SK-N-SH (cell line): ENCODE measurements at regions of chr17 and their contacts with region 1.

Region 1: GRCh38 chr17:29111816-29112499 is 68.2 kb downstream of the MYO18A start:
- DNase-seq: peak; percentile 82
- H3K4me3 ChIP-seq: no peak overlapping the region
- H3K27ac ChIP-seq: no peak overlapping the region
- H3K4me1 ChIP-seq: peaks cover 5 to 39% of the 10 kb centered on the region in 2 experiments; a peak in 2 of 4 replicates
- H3K27me3 ChIP-seq: no peaks in the 10 kb centered on the region
- CTCF ChIP-seq: peak; percentile 91
- EP300 ChIP-seq: no peak
- RAD21 ChIP-seq: peak; percentile 94

Region 2: DNA sequence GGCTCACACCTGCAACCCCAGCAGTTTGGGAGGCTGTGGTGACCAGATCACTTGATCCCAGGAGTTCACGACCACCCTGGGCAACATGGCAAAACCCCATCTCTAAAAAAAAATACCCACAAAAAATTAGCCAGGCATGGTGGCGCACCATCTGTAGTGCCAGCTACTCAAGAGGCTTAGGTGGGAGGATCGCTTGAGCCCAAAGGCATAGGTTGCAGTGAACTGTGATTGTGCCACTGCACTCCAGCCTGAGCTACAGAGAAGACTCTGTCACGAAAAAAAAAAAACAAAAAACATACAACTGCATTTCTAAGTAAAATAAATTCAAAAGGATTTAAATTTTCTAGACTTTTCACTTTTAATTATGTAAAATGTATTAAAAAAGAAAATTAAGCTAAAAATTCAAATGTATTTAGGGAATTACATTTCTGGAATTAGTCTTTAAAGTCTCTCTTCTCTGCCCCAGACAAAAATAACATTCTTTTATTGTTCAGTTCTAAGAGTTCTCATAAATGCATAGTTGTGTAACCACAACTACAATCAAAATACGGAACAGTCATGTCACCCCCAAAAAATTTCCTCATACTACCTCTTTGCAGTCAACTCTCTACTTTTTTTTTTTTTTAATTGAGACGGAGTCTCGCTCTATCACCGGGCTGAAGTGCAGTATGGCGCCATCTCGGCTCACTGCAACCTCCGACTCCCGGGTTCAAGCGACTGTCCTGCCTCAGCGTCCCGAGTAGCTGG is 283.5 kb before region 1 on chr17:
- CTCF ChIA-PET with region 1: no interaction called
- POLR2A ChIA-PET with region 1: no interaction called
- DNase-seq: no peak
- H3K4me3 ChIP-seq: no peak overlapping the region
- H3K27ac ChIP-seq: no peak overlapping the region; a peak in 1 of 4 replicates
- H3K4me1 ChIP-seq: no peaks in the 10 kb centered on the region
- H3K27me3 ChIP-seq: no peaks in the 10 kb centered on the region
- CTCF ChIP-seq: no peak
- EP300 ChIP-seq: no peak
- RAD21 ChIP-seq: no peak

Region 3: GRCh38 chr17:28951991-28952975 is 159.7 kb before region 1 on chr17:
- CTCF ChIA-PET with region 1: interaction called, 947 read pairs
- POLR2A ChIA-PET with region 1: no interaction called
- DNase-seq: peak; percentile 88
- H3K4me3 ChIP-seq: peak overlapping the region; percentile 80 to 81
- H3K27ac ChIP-seq: peak overlapping the region; percentile 99 to 100
- H3K4me1 ChIP-seq: peaks cover 14 to 24% of the 10 kb centered on the region in 2 experiments
- H3K27me3 ChIP-seq: no peaks in the 10 kb centered on the region
- CTCF ChIP-seq: no peak
- EP300 ChIP-seq: no peak
- RAD21 ChIP-seq: no peak

Region 4: GRCh38 chr17:28982131-28982951 is 129.6 kb before region 1 on chr17:
- CTCF ChIA-PET with region 1: interaction called, 23 read pairs
- POLR2A ChIA-PET with region 1: no interaction called
- DNase-seq: no peak
- H3K4me3 ChIP-seq: no peak overlapping the region
- H3K27ac ChIP-seq: no peak overlapping the region
- H3K4me1 ChIP-seq: peaks cover 12 to 25% of the 10 kb centered on the region in 2 experiments; a peak in 2 of 4 replicates
- H3K27me3 ChIP-seq: peaks cover 4% of the 10 kb centered on the region; the same call in 1 of the 2 replicates
- CTCF ChIP-seq: no peak
- EP300 ChIP-seq: no peak
- RAD21 ChIP-seq: no peak

Region 5: DNA sequence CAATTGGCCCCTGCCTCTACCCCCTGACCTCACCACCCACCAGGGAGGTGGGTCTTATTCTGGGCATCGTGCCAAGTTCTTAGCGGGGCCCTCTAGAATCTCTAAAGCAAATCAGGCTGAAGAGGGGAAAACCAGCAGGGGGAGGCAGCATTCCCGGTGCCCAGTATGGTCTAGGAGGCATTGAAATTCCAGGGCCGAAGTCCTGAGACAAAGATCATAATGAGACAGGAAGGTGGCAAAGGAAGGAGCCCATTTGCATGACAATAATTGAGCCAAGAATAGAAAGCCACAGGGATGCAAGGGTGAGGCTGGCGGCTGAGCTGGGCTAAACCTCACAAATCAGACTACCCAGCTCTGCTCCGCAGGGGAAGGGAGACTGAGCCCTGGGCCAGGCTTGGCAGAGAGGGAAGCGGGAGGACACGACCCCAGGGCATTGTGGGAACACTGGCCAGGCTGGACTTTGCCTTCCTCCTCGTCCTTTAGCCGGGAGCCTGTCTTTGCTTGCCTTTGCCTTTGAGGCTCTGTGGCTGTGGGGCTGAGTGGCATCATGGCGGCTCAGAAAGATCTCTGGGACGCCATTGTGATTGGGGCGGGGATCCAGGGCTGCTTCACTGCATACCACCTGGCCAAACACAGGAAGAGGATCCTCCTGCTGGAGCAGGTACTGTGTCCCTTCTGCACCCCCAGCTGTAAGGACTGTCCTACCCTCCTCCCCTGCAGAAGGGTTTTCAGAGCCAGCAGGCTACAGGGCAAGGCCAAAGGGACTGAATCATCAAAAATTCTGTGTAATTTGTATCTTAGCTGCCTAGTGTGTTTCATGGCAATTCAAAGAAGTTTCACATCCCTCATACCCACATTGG is 69.0 kb before region 1 on chr17 and contains the start of gene PIPOX:
- CTCF ChIA-PET with region 1: interaction called, 180 read pairs
- POLR2A ChIA-PET with region 1: interaction called, 3 read pairs
- DNase-seq: peak; percentile 76
- H3K4me3 ChIP-seq: no peak within 1 kb of the TSS
- H3K27ac ChIP-seq: peak within 1 kb of the TSS in 1 of 2 experiments; percentile 58; a peak in 2 of 4 replicates
- H3K4me1 ChIP-seq: peaks cover 43 to 49% of the 10 kb centered on the region in 2 experiments; a peak in 3 of 4 replicates
- H3K27me3 ChIP-seq: 0 out of 2 replicates have a peak, but pooled peaks cover under 1% of the 10 kb centered on the region
- CTCF ChIP-seq: peak; percentile 32; the same call in 1 of the 2 replicates
- EP300 ChIP-seq: no peak
- RAD21 ChIP-seq: peak; percentile 59
- polyA plus RNA-seq, gene PIPOX: 0.31 and 0.55 TPM in 2 replicates

Region 6: GRCh38 chr17:29070781-29071702 is 40.9 kb before region 1 on chr17:
- CTCF ChIA-PET with region 1: interaction called, 10 read pairs
- POLR2A ChIA-PET with region 1: no interaction called
- DNase-seq: no peak
- H3K4me3 ChIP-seq: no peak overlapping the region
- H3K27ac ChIP-seq: no peak overlapping the region
- H3K4me1 ChIP-seq: peaks cover 0 to 13% of the 10 kb centered on the region in 2 experiments; a peak in 2 of 4 replicates
- H3K27me3 ChIP-seq: no peaks in the 10 kb centered on the region
- CTCF ChIP-seq: no peak
- EP300 ChIP-seq: no peak
- RAD21 ChIP-seq: no peak

Region 7: GRCh38 chr17:29090750-29091603 is 21.0 kb before region 1 on chr17:
- CTCF ChIA-PET with region 1: interaction called, 31 read pairs
- POLR2A ChIA-PET with region 1: no interaction called
- DNase-seq: peak; percentile 56
- H3K4me3 ChIP-seq: no peak overlapping the region
- H3K27ac ChIP-seq: peak overlapping the region in 1 of 2 experiments; percentile 53; a peak in 2 of 4 replicates
- H3K4me1 ChIP-seq: peaks cover 0 to 21% of the 10 kb centered on the region in 2 experiments; a peak in 3 of 4 replicates
- H3K27me3 ChIP-seq: no peaks in the 10 kb centered on the region
- CTCF ChIP-seq: no peak
- EP300 ChIP-seq: no peak
- RAD21 ChIP-seq: no peak; the same call in 1 of the 2 replicates

Region 8: DNA sequence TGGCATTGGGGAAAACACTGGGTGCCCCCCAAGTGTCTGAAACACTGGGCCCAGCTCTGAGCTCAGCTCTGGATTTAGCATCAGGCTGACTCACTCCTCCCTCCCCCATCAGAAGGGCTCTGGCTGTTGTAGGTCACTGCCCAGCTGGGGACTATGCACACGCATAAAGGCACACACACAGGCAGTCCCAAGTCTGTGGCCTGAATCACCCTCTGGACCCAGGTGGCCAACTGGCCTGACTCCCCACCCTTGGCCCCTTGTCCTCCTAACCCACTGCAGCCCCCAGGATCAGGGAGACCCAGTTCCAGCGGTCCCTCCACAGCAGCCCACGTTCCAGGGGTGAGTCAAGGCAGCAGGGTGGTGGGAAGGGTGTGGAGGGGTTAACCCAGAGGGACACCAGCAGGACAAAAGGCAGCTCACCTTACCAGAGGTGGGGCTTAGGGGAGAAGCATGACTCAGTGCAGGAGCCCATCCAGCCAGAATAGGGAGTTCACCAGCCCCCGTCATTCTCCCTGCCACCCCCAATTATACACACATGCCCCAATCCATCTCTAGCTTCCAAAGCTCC is 21.3 kb after region 1 on chr17:
- CTCF ChIA-PET with region 1: interaction called, 535 read pairs
- POLR2A ChIA-PET with region 1: no interaction called
- DNase-seq: no peak
- H3K4me3 ChIP-seq: no peak overlapping the region
- H3K27ac ChIP-seq: peak overlapping the region; percentile 50 to 62; a peak in 2 of 4 replicates
- H3K4me1 ChIP-seq: peaks cover 20 to 27% of the 10 kb centered on the region in 2 experiments
- H3K27me3 ChIP-seq: no peaks in the 10 kb centered on the region
- CTCF ChIP-seq: no peak
- EP300 ChIP-seq: no peak
- RAD21 ChIP-seq: no peak